ENCODE measurements at regions of chr9 and their contacts with region 1.

Region 1: GRCh38 chr9:107484117-107484723 is 5.3 kb downstream of the KLF4 start:
- DNase-seq: peak; percentile 34
- H3K4me3 Mint-ChIP-seq: no peak overlapping the region
- H3K27ac Mint-ChIP-seq: no peak overlapping the region
- H3K4me1 Mint-ChIP-seq: peaks cover 7% of the 10 kb centered on the region
- H3K27me3 Mint-ChIP-seq: no peaks in the 10 kb centered on the region
- CTCF ChIP-seq: peak; percentile 19

Region 2: GRCh38 chr9:107409581-107410387 is 74.4 kb before region 1 on chr9:
- CTCF ChIA-PET with region 1: no interaction called
- intact Hi-C with region 1: no loop called
- DNase-seq: no peak
- H3K4me3 Mint-ChIP-seq: no peak overlapping the region
- H3K27ac Mint-ChIP-seq: no peak overlapping the region
- H3K4me1 Mint-ChIP-seq: no peaks in the 10 kb centered on the region
- H3K27me3 Mint-ChIP-seq: no peaks in the 10 kb centered on the region
- CTCF ChIP-seq: no peak

Region 3: DNA sequence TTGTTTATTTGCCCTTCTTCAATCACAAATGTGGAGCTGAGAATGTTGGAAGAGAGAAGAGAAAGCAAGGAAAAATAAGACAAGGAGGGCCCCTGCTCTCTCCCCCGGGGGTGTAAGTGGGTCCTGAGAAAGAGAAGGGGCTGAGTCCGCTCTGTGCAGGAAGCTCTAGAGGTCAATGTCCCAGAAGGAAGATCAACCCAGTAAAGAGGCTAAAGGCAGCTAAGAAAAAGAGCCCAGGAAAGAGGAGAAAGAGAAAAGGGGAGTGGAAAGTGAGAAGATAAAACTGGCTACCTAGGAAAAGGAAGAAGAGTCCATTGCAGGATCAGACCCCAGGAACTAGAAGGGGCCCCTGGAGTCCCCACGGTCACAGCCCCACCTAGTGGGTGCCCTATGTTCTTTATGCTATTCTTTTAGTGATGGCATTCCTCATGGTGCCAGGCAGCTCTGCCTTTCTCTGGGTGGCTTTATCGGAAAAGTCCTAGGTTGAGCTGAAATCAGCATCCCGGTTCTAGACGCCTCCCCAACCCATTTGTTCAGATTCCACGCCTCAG is 788.2 kb after region 1 on chr9:
- CTCF ChIA-PET with region 1: interaction called, 3 read pairs
- intact Hi-C with region 1: loop called (anchors 1 kb)
- DNase-seq: peak; percentile 66
- H3K4me3 Mint-ChIP-seq: peak overlapping the region; percentile 70
- H3K27ac Mint-ChIP-seq: peak overlapping the region; percentile 90
- H3K4me1 Mint-ChIP-seq: peaks cover 36% of the 10 kb centered on the region
- H3K27me3 Mint-ChIP-seq: no peaks in the 10 kb centered on the region
- CTCF ChIP-seq: peak; percentile 49

Measured in Calu3 (cell line).